ENCODE measurements at regions of chrX and their contacts with region 1.

Region 1: GRCh38 chrX:9980927-9981326 is 13.8 kb downstream of the CLDN34 start:
- DNase-seq: no peak
- ATAC-seq: no peak
- H3K4me3 Mint-ChIP-seq: no peak overlapping the region
- H3K27ac Mint-ChIP-seq: no peak overlapping the region
- H3K4me1 Mint-ChIP-seq: peaks cover 29% of the 10 kb centered on the region
- H3K27me3 Mint-ChIP-seq: no peaks in the 10 kb centered on the region
- CTCF ChIP-seq: no peak

Region 2: GRCh38 chrX:9935436-9935835 is 45.5 kb before region 1 on chrX:
- CTCF ChIA-PET with region 1: no interaction called
- POLR2A ChIA-PET with region 1: interaction called, 12 read pairs
- DNase-seq: no peak
- ATAC-seq: no peak
- H3K4me3 Mint-ChIP-seq: no peak overlapping the region
- H3K27ac Mint-ChIP-seq: no peak overlapping the region
- H3K4me1 Mint-ChIP-seq: peaks cover 15% of the 10 kb centered on the region
- H3K27me3 Mint-ChIP-seq: no peaks in the 10 kb centered on the region
- CTCF ChIP-seq: no peak